ENCODE measurements at regions of chr7 and their contacts with region 1.

Region 1: GRCh38 chr7:149529136-149529718 is 31.6 kb upstream of the ZNF746 start:
- DNase-seq: no peak

Region 2: GRCh38 chr7:149291036-149291780 is 238.0 kb before region 1 on chr7:
- intact Hi-C with region 1: loop called in 1 of 2 experiments (anchors 10 kb)
- DNase-seq: peak; percentile 55

Measured in posterior vena cava (tissue), 2 donors.